ENCODE measurements at regions of chrX and their contacts with region 1.

Region 1: DNA sequence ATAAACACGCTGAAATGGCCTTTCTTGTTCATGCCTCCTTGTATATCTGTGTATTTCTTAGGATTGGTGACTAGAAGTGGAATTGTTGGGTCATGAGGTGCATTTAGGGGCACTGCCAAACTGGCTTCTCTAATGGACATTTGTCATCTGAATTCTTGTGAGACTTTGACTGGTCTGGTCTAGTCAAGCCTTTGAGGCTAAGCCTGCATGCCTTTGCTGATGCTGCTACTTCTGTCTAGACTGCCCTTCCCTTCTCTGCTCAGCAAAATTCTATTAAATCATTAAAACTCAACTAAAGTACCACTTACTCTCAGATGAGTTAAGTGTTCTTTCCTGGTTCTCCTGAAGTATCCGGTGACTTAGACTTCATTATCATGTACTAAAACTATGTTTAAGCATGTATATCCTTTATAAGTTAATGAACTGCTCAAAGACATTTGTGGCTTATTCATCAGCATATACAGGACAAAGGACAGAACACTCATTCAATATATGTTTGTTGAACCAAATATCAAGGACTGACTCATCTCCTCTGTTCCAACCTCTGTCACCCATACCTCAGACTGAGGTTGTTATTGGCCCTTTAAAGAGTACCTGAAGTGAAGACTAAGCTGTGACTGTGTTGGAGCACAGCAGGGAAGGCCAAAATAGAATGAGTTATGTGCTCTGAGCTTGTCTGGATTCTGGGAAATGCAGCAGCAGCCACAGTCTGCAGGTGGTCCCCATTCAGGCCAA is 9.0 kb downstream of the TCEAL1 start:
- DNase-seq: peak; percentile 89
- ATAC-seq: peak; percentile 91
- H3K4me3 ChIP-seq: peak overlapping the region; percentile 0; the same call in 1 of the 2 replicates
- H3K27ac ChIP-seq: peak overlapping the region; percentile 91
- H3K4me1 ChIP-seq: peaks cover 60% of the 10 kb centered on the region
- H3K27me3 ChIP-seq: no peaks in the 10 kb centered on the region
- CTCF ChIP-seq: no peak

Region 2: DNA sequence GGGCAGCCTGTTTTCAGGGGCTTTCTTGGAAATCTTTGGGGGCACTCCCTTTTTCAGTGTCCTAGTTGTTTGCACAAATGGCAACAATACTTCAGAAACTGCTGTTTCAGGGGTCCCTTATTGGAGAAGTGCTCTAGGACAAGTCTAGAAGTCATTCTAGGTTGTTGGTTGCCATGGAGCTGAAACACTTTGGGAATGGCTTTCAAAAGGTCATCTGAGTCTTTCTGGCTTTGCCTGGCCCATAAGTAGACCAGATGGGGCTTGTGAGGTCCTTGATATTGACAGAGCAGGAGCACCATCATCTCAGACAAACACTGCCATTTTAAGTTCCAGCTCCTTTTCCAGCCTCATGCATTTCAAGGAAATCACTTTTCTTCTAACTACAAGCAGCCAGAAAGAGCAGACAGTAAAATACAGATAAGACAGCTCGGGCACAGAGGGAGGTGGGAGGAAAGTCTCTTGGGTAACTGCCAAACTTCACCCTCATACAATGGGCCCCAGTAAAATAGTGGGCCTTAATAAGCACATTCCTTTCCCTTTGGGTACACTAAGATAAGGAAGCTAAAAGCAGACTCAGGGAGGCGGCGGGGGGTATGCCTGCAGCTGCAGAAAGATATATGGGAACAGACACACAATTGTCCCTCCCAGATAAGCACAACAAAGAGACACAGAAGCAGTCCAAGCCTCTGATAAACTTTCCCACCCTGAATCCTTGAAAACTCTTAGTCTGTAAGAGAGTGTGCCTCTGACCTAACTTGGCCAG is 536.3 kb before region 1 on chrX:
- CTCF ChIA-PET with region 1: no interaction called
- POLR2A ChIA-PET with region 1: no interaction called
- intact Hi-C with region 1: no loop called
- DNase-seq: no peak
- ATAC-seq: no peak
- H3K4me3 ChIP-seq: no peak overlapping the region
- H3K27ac ChIP-seq: no peak overlapping the region
- H3K4me1 ChIP-seq: no peaks in the 10 kb centered on the region
- H3K27me3 ChIP-seq: no peaks in the 10 kb centered on the region
- CTCF ChIP-seq: no peak

Region 3: GRCh38 chrX:103573208-103573607 is 64.6 kb before region 1 on chrX:
- CTCF ChIA-PET with region 1: no interaction called
- POLR2A ChIA-PET with region 1: no interaction called
- intact Hi-C with region 1: no loop called
- DNase-seq: no peak
- ATAC-seq: no peak
- H3K4me3 ChIP-seq: no peak overlapping the region
- H3K27ac ChIP-seq: no peak overlapping the region
- H3K4me1 ChIP-seq: no peaks in the 10 kb centered on the region
- H3K27me3 ChIP-seq: no peaks in the 10 kb centered on the region
- CTCF ChIP-seq: no peak

Region 4: GRCh38 chrX:103656632-103657031 is 18.9 kb after region 1 on chrX:
- CTCF ChIA-PET with region 1: no interaction called
- POLR2A ChIA-PET with region 1: no interaction called
- intact Hi-C with region 1: loop called (anchors 2 kb)
- DNase-seq: peak; percentile 95
- ATAC-seq: peak; percentile 88
- H3K4me3 ChIP-seq: peak overlapping the region; percentile 40; the same call in 1 of the 2 replicates
- H3K27ac ChIP-seq: peak overlapping the region; percentile 99
- H3K4me1 ChIP-seq: peaks cover 48% of the 10 kb centered on the region
- H3K27me3 ChIP-seq: no peaks in the 10 kb centered on the region
- CTCF ChIP-seq: no peak

Region 5: GRCh38 chrX:103674531-103675454 is 37.0 kb after region 1 on chrX:
- CTCF ChIA-PET with region 1: no interaction called
- POLR2A ChIA-PET with region 1: no interaction called
- intact Hi-C with region 1: loop called (anchors 5 kb)
- DNase-seq: no peak
- ATAC-seq: peak; percentile 38
- H3K4me3 ChIP-seq: no peak overlapping the region
- H3K27ac ChIP-seq: no peak overlapping the region
- H3K4me1 ChIP-seq: peaks cover 11% of the 10 kb centered on the region
- H3K27me3 ChIP-seq: no peaks in the 10 kb centered on the region
- CTCF ChIP-seq: no peak